Gastrocnemius medialis (tissue), 4 donors: ENCODE measurements at regions of chr10 and their contacts with region 1.

Region 1: DNA sequence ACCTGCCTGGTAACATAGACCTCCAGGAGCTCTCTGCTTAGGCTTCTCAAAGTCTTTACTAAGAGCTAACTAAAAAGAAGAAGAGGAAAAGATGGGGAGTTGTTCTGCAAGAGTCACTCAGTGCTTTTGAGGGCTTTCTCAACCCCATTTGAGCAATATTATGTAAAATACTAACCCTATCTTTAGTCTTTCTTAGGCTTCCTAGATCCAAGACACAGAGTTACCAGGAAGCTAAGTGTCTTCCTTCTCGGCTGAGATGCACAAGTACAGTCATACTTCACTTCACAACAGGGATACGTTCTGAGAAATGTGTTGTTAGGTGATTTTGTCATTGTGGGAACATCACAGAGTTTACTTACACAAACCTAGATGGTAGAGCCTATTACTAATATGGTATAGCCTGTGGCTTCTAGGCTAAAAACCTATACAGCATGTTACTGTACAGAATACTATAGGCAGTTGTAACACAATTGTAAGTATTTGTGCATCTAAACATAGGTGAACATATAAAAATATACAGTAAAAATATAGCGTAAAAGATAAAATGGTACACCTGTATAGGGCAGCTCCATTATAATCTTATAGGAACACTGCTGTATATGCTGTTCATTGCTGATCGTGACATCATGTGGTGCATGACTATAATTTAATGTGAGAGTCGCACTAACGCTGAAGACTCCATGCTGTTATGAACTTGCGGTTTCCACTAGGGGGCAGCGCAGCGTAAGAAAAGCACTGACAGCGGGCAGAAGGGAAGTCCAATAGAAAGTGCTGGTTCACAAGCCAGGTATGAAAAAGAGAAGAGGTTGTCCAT is 16.3 kb downstream of the ANKRD22 start:
- DNase-seq: peak; percentile 54 to 66
- ATAC-seq: peak; percentile 81 to 87
- H3K4me3 ChIP-seq: no peak overlapping the region
- H3K27ac ChIP-seq: no peak overlapping the region
- H3K4me1 ChIP-seq: no peaks in the 10 kb centered on the region
- H3K27me3 ChIP-seq: no peaks in the 10 kb centered on the region
- CTCF ChIP-seq: peak; percentile 69 to 82 (median 73)
- POLR2A ChIP-seq: no peak

Region 2: DNA sequence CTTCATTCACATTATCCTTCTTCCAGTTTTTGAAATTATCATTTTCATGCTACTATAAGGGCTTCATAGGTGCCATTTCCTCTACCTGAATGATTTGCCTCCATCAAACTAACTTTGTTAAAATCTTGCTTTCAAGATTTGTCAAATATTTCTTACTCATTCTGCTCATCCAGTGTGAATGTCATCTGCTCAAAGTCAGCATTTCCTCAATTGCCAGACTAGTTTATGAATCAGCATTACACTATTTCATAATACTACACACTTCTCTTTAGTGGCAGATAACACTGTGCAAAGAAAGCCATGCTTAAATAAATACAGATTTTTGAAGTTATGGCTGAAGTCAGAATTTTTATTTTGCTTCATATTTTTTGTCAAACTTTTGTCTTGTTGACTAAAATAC is 192.3 kb before region 1 on chr10:
- in situ Hi-C with region 1: no loop called
- intact Hi-C with region 1: no loop called
- DNase-seq: no peak
- ATAC-seq: no peak
- H3K4me3 ChIP-seq: no peak overlapping the region
- H3K27ac ChIP-seq: no peak overlapping the region
- H3K4me1 ChIP-seq: no peaks in the 10 kb centered on the region
- H3K27me3 ChIP-seq: no peaks in the 10 kb centered on the region
- CTCF ChIP-seq: no peak
- POLR2A ChIP-seq: no peak

Region 3: DNA sequence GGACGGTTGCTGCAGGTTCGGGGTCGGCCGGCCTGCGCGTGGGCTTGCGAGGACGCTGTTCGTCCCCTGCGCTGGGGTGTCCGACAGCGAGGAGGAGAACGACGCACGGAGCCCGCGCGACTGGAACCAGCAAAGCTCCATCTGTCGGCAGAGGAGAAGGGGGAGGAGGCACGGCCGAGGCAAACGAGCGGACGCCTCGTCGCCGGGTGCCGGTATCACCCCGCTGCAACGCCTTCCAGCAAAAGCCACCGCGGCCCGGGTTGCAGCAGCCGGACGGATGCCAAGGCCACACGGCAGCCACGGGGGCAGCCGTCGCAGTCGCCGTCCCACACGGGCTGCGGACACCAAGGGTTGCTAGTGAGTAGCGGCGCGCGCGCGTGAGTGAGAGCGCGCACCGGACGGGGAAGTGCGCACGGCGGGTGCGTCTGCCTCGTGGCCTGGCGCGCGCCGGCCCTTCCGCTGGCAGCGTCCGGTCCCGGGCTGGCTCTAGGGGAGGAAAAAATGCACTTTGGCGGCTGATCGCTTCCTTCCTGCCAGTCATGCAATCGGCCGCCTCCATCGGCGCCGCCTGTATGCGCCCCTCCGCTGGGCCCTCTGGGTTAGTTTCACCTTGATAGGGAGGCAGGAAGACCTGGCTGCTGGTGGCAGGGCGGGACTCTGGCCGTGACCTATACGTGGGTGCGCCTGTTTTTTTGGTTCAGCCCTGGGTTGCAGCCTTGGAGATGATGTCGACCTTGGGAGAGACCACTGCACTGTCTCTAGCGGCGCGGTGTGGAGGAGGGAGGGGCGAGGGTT is 45.2 kb after region 1 on chr10:
- in situ Hi-C with region 1: loop called in 1 of 4 experiments (anchors 5 kb)
- intact Hi-C with region 1: no loop called
- DNase-seq: peak; percentile 34 to 60
- ATAC-seq: peak; percentile 76 to 81
- H3K4me3 ChIP-seq: peak overlapping the region; percentile 66 to 85 (median 74)
- H3K27ac ChIP-seq: peak overlapping the region; percentile 67 to 83 (median 80)
- H3K4me1 ChIP-seq: peaks cover 8 to 21% of the 10 kb centered on the region in 2 donors
- H3K27me3 ChIP-seq: peaks cover 0 to 10% (median 6%) of the 10 kb centered on the region in 3 donors
- CTCF ChIP-seq: peak in 1 of 5 experiments; percentile 23
- POLR2A ChIP-seq: peak; percentile 34 to 62

Region 4: GRCh38 chr10:88983206-88983605 is 147.9 kb after region 1 on chr10:
- in situ Hi-C with region 1: loop called in 2 of 4 experiments (anchors 5 kb)
- intact Hi-C with region 1: loop called (anchors 5 kb)
- DNase-seq: no peak
- ATAC-seq: no peak
- H3K4me3 ChIP-seq: no peak overlapping the region
- H3K27ac ChIP-seq: peak overlapping the region; percentile 24 to 53 (median 40)
- H3K4me1 ChIP-seq: peaks cover 0 to 9% of the 10 kb centered on the region in 2 donors
- H3K27me3 ChIP-seq: no peaks in the 10 kb centered on the region
- CTCF ChIP-seq: no peak
- POLR2A ChIP-seq: no peak

Region 5: GRCh38 chr10:88990384-88991160 is 155.3 kb after region 1 on chr10 and contains the start of gene FAS:
- in situ Hi-C with region 1: loop called in 1 of 4 experiments (anchors 5 kb)
- intact Hi-C with region 1: loop called (anchors 5 kb)
- DNase-seq: peak; percentile 24 to 54
- ATAC-seq: peak; percentile 52 to 66
- H3K4me3 ChIP-seq: peak within 1 kb of the TSS; percentile 72 to 88 (median 82)
- H3K27ac ChIP-seq: peak within 1 kb of the TSS; percentile 76 to 87 (median 84)
- H3K4me1 ChIP-seq: peaks cover 7 to 9% of the 10 kb centered on the region in 2 donors
- H3K27me3 ChIP-seq: no peaks in the 10 kb centered on the region
- CTCF ChIP-seq: no peak
- POLR2A ChIP-seq: peak; percentile 1 to 27
- total RNA-seq, gene FAS: 2.7 to 5.9 (median 4.9) TPM

Region 6: GRCh38 chr10:89217057-89217990 is 382.0 kb after region 1 on chr10:
- in situ Hi-C with region 1: loop called (anchors 5 to 25 kb)
- intact Hi-C with region 1: loop called (anchors 10 kb)
- DNase-seq: peak in 1 of 2 donors; percentile 28
- ATAC-seq: peak; percentile 46 to 82
- H3K4me3 ChIP-seq: peak overlapping the region in 2 of 4 donors; percentile 9 to 15
- H3K27ac ChIP-seq: peak overlapping the region; percentile 59 to 68 (median 62)
- H3K4me1 ChIP-seq: peaks cover 6 to 8% of the 10 kb centered on the region in 2 donors
- H3K27me3 ChIP-seq: no peaks in the 10 kb centered on the region
- CTCF ChIP-seq: peak; percentile 63 to 80 (median 68)
- POLR2A ChIP-seq: no peak